HCT116 (cell line): ENCODE measurements at regions of chr14 and their contacts with region 1.

Region 1: DNA sequence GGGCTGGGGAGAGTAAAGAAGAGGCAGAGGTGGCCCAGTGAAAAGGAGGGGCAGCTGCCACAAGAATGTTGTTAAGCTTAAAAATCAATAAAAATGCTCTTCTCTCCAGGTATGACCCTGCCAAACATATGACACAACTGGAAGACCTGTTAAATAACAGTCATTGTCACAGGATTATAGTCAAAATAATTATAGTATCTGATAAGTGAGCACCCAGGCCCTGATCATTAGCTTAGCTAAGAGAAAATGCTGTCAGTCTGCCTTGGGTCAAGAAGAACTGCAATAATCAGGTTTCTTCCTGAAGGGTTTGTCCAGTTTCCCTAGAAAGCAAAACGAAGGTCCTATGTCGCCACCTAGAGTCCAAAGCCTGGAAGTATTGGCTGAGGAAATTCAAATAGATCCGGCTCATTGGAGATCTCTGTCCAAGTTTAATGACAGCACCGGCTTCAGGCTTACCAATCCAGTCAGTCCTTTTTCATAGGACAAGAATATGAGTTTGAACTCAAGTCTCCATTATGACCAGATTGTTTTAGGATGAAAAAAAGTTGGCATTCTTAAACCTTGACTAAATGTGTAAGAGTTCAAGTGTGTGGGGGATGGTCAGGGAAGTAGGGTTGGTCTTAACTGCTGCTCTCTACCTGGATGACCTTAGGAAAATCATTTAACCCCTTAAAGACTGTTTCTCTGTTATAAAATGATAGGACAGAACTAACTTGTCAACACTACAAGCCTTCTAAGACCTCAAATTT is 22.5 kb upstream of the NKX2-8 start:
- DNase-seq: peak; percentile 76
- ATAC-seq: peak; percentile 94
- H3K4me3 ChIP-seq: no peak overlapping the region
- H3K27ac ChIP-seq: no peak overlapping the region
- H3K4me1 ChIP-seq: peaks cover 0 to 9% of the 10 kb centered on the region in 2 experiments; a peak in 2 of 4 replicates
- H3K27me3 ChIP-seq: no peaks in the 10 kb centered on the region
- CTCF ChIP-seq: peak; percentile 77 to 83 (median 80)
- POLR2A ChIP-seq: no peak
- RAD21 ChIP-seq: peak; percentile 82

Region 2: DNA sequence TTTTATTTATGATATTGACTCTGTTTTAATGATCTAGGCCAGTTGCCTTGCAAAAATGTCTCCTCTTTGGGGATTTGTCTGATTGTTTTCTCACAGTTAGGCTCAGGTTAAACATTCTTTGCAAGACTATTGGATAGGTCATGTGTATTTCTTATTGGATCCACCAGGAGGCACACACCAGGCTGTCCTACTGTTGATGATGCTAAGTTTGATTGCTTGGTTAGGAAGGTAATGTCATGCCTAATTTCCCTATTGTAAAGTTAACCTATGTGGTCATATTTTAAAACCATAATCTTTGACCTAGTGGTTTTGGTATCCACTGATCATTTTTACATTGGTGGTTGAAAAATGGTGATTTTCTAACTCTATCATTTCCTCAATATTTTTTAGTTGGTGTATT is 641.7 kb before region 1 on chr14:
- CTCF ChIA-PET with region 1: no interaction called
- POLR2A ChIA-PET with region 1: no interaction called
- RAD21 ChIA-PET with region 1: interaction called in 1 of 2 experiments, 3 read pairs
- intact Hi-C with region 1: loop called (anchors 10 kb)
- DNase-seq: peak; percentile 15
- ATAC-seq: peak; percentile 82
- H3K4me3 ChIP-seq: no peak overlapping the region
- H3K27ac ChIP-seq: no peak overlapping the region
- H3K4me1 ChIP-seq: no peaks in the 10 kb centered on the region
- H3K27me3 ChIP-seq: no peaks in the 10 kb centered on the region
- CTCF ChIP-seq: peak; percentile 13 to 62 (median 50); a peak in 4 of 6 replicates
- POLR2A ChIP-seq: no peak
- RAD21 ChIP-seq: peak; percentile 30; the same call in 1 of the 2 replicates

Region 3: GRCh38 chr14:36339816-36340215 is 265.1 kb before region 1 on chr14:
- CTCF ChIA-PET with region 1: no interaction called
- POLR2A ChIA-PET with region 1: no interaction called
- RAD21 ChIA-PET with region 1: no interaction called
- intact Hi-C with region 1: no loop called
- DNase-seq: no peak
- ATAC-seq: no peak
- H3K4me3 ChIP-seq: no peak overlapping the region
- H3K27ac ChIP-seq: no peak overlapping the region
- H3K4me1 ChIP-seq: no peaks in the 10 kb centered on the region
- H3K27me3 ChIP-seq: no peaks in the 10 kb centered on the region
- CTCF ChIP-seq: no peak
- POLR2A ChIP-seq: no peak
- RAD21 ChIP-seq: no peak

Region 4: DNA sequence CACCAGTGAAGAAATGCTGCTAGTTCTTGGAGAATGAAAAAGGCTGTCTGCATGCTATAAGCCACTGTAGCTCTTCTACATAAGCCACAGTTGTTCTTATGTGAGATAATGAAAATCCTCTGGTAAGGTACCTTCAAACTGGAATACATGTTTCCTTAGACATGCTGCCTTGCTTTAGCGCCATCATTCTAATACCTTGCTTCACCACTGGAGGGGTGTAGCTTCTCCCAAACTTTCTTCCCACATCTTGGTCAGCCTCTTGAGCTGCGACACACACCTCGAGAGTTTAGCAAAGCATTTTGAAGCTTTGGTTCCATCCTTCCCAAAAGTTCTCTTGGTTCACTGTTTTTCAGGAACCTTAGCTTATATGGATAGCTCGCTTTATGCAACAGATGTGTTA is 154.4 kb before region 1 on chr14:
- CTCF ChIA-PET with region 1: interaction called, 6 read pairs
- POLR2A ChIA-PET with region 1: no interaction called
- RAD21 ChIA-PET with region 1: no interaction called
- intact Hi-C with region 1: loop called (anchors 1 kb)
- DNase-seq: no peak
- ATAC-seq: peak; percentile 79
- H3K4me3 ChIP-seq: no peak overlapping the region
- H3K27ac ChIP-seq: no peak overlapping the region
- H3K4me1 ChIP-seq: no peaks in the 10 kb centered on the region
- H3K27me3 ChIP-seq: no peaks in the 10 kb centered on the region
- CTCF ChIP-seq: peak in 2 of 3 experiments; percentile 43 to 52; a peak in 4 of 6 replicates
- POLR2A ChIP-seq: no peak
- RAD21 ChIP-seq: peak; percentile 26; the same call in 1 of the 2 replicates

Region 5: GRCh38 chr14:36591482-36591881 is 13.4 kb before region 1 on chr14:
- CTCF ChIA-PET with region 1: interaction called, 13 read pairs
- POLR2A ChIA-PET with region 1: no interaction called
- RAD21 ChIA-PET with region 1: no interaction called
- intact Hi-C with region 1: no loop called
- DNase-seq: no peak
- ATAC-seq: no peak
- H3K4me3 ChIP-seq: no peak overlapping the region
- H3K27ac ChIP-seq: no peak overlapping the region
- H3K4me1 ChIP-seq: no peaks in the 10 kb centered on the region
- H3K27me3 ChIP-seq: no peaks in the 10 kb centered on the region; the same call in 1 of the 2 replicates
- CTCF ChIP-seq: no peak
- POLR2A ChIP-seq: no peak
- RAD21 ChIP-seq: no peak

Region 6: DNA sequence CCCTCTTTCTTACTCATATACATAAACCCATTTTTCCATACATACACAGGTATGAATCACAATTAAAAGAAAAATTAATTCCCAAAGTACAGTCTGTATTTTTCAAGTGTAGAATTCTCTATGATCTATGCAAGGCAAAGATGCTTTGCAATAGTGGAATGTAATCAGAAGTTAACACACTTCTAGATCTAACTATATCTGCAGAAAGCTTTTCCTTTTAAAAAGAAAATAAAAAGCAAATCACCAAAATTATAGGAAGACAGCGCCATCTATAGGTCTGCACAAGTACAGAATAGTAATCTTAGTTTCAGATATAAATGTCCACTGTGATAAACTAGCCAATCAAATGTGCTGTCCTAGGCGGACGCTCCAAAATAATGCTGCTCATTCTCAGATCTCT is 545.5 kb after region 1 on chr14:
- CTCF ChIA-PET with region 1: interaction called, 17 read pairs
- POLR2A ChIA-PET with region 1: no interaction called
- RAD21 ChIA-PET with region 1: no interaction called
- intact Hi-C with region 1: no loop called
- DNase-seq: no peak
- ATAC-seq: peak; percentile 91
- H3K4me3 ChIP-seq: no peak overlapping the region
- H3K27ac ChIP-seq: no peak overlapping the region
- H3K4me1 ChIP-seq: peaks cover 0 to 3% of the 10 kb centered on the region in 2 experiments; a peak in 1 of 4 replicates
- H3K27me3 ChIP-seq: no peaks in the 10 kb centered on the region
- CTCF ChIP-seq: peak; percentile 62 to 89 (median 69); a peak in 5 of 6 replicates
- POLR2A ChIP-seq: no peak
- RAD21 ChIP-seq: peak; percentile 68